ENCODE measurements at regions of chr2 and their contacts with region 1.

Region 1: GRCh38 chr2:8836971-8837794 is at the start of gene KIDINS220:
- DNase-seq: peak; percentile 91
- H3K4me3 Mint-ChIP-seq: peak within 1 kb of the TSS; percentile 98
- H3K27ac Mint-ChIP-seq: peak within 1 kb of the TSS; percentile 85
- H3K4me1 Mint-ChIP-seq: peaks cover 34% of the 10 kb centered on the region
- H3K27me3 Mint-ChIP-seq: no peaks in the 10 kb centered on the region
- total RNA-seq, gene KIDINS220: 23.1 to 23.5 TPM

Region 2: DNA sequence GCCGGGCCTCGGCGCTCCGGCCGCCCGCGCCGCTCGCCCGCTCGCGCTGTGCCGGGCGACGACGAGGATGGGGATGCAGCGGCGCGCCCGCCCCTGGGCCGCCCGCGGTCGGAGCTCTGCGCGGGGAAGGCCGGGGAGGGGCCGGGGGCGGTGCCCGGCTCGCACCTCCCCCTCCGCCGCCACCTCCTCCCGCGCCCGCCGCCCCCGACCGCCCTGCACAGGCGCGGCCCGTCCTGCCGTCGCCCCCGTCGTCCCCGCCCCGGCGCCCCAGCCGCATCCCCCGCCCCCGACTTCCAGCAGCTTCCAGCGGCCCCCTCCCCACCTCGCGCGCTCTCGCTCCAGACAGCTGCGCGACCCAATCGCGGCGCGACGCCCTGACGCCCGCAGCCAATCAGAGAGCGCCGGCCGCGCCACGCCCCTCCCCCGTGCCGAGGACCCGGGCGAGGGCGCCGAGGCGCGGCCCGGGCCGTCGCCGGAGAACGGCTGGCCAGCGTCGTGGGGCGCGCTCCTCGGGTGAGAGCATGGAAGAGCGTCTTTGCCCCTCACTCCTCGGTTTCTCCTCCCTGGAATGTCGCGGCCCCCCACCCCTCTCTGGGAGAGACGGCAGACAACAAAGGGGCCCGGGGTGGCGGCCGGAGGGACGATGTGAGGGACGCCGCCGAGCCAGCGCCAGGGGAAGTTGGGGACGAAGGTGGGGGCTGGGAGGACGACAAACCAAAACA is 166.6 kb after region 1 on chr2 and contains the start of gene MBOAT2:
- CTCF ChIA-PET with region 1: no interaction called
- POLR2A ChIA-PET with region 1: interaction called, 4 read pairs
- intact Hi-C with region 1: loop called (anchors 5 kb)
- DNase-seq: peak; percentile 84
- H3K4me3 Mint-ChIP-seq: peak within 1 kb of the TSS; percentile 75
- H3K27ac Mint-ChIP-seq: no peak within 1 kb of the TSS
- H3K4me1 Mint-ChIP-seq: peaks cover 16% of the 10 kb centered on the region
- H3K27me3 Mint-ChIP-seq: peaks cover 5% of the 10 kb centered on the region
- total RNA-seq, gene MBOAT2: 6.4 to 7.0 TPM

Measured in activated CD4-positive, alpha-beta memory T cell treated with anti-CD3 and anti-CD28 coated beads for 36 hours (primary cell).